Sigmoid colon (tissue), 7 donors: ENCODE measurements at regions of chr16 and their contacts with region 1.

Region 1: DNA sequence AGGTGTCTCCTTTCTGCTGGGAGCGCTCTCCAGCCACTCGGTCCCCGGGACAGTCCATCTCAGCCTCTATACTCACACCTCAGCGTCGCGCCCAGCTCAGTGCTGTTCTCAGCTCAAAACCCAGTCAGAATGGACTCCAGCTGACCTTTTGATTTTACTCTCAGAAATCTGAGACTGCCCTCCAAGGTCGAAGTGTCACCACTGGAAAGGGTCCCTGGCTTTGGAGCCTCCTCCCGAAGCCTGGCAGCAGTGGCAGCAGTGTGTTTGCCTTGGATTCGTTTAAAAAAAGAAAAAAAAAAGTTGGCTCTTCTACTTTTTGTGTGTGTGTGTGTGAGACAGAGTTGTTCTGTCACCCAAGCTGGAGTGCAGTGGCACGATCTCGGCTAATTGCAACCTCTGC is 10.4 kb downstream of the KLHL36 start:
- DNase-seq: no peak
- H3K4me3 ChIP-seq: no peak overlapping the region
- H3K27ac ChIP-seq: no peak overlapping the region
- H3K4me1 ChIP-seq: no peaks in the 10 kb centered on the region
- H3K27me3 ChIP-seq: no peaks in the 10 kb centered on the region
- CTCF ChIP-seq: no peak
- EP300 ChIP-seq: no peak
- POLR2A ChIP-seq: no peak

Region 2: DNA sequence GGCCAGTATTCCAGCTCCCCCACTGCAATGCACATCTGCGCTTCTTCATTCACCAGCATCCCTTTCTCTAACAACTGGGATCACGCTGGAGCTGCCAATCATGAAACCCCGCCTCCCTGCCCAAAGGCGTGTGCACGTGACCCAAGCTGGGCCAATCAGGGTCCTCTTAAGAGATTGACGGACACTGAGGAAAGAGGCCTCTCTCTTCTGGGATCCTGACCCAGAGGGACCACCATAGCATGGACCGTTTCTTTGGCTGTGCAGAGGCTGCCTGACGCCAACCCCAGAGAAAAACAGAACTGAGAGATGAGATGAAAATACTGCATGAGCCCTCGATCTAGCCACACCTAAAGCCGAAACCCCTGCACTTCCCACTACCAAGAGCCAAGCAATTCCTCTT is 72.8 kb before region 1 on chr16:
- intact Hi-C with region 1: no loop called
- DNase-seq: no peak
- H3K4me3 ChIP-seq: no peak overlapping the region
- H3K27ac ChIP-seq: no peak overlapping the region
- H3K4me1 ChIP-seq: peaks cover 0 to 24% (median 10%) of the 10 kb centered on the region in 4 donors
- H3K27me3 ChIP-seq: no peaks in the 10 kb centered on the region
- CTCF ChIP-seq: no peak
- EP300 ChIP-seq: no peak
- POLR2A ChIP-seq: no peak

Region 3: DNA sequence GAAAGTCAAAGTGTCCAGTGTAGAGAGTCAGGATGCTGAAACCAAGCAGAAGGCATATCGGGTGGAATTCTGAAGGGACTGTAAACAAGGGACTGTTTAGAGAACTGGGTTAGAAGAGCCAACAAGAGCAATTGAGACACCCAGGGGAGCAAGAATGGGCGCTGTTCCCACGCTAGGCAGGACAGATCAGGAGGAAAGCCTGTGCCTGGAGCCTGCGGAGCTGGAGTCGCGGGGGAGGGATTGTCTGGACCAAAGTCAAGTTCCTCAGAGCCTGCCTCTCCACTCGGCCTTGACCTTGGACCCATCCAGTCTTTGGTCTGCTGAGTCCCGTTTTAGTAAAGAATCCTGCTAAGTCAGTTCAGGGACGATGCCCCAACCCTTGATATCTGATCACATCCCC is 25.1 kb before region 1 on chr16:
- intact Hi-C with region 1: no loop called
- DNase-seq: peak; percentile 88
- H3K4me3 ChIP-seq: no peak overlapping the region
- H3K27ac ChIP-seq: no peak overlapping the region
- H3K4me1 ChIP-seq: no peaks in the 10 kb centered on the region
- H3K27me3 ChIP-seq: no peaks in the 10 kb centered on the region
- CTCF ChIP-seq: no peak
- EP300 ChIP-seq: no peak
- POLR2A ChIP-seq: no peak

Region 4: GRCh38 chr16:84687715-84688114 is 29.0 kb after region 1 on chr16:
- intact Hi-C with region 1: loop called (anchors 2 kb)
- DNase-seq: peak; percentile 13
- H3K4me3 ChIP-seq: no peak overlapping the region
- H3K27ac ChIP-seq: no peak overlapping the region
- H3K4me1 ChIP-seq: no peaks in the 10 kb centered on the region
- H3K27me3 ChIP-seq: peaks cover 0 to 2% (median 0%) of the 10 kb centered on the region in 3 donors
- CTCF ChIP-seq: no peak
- EP300 ChIP-seq: no peak
- POLR2A ChIP-seq: no peak

Region 5: GRCh38 chr16:85316321-85316919 is 657.7 kb after region 1 on chr16:
- intact Hi-C with region 1: no loop called
- DNase-seq: no peak
- H3K4me3 ChIP-seq: no peak overlapping the region
- H3K27ac ChIP-seq: no peak overlapping the region
- H3K4me1 ChIP-seq: peaks cover 0 to 49% (median 36%) of the 10 kb centered on the region in 4 donors
- H3K27me3 ChIP-seq: no peaks in the 10 kb centered on the region
- CTCF ChIP-seq: peak; percentile 63 to 79 (median 74)
- EP300 ChIP-seq: no peak
- POLR2A ChIP-seq: no peak